Activated CD8-positive, alpha-beta T cell treated with anti-CD3 and anti-CD28 coated beads for 36 hours (primary cell): ENCODE measurements at regions of chrX and their contacts with region 1.

Region 1: DNA sequence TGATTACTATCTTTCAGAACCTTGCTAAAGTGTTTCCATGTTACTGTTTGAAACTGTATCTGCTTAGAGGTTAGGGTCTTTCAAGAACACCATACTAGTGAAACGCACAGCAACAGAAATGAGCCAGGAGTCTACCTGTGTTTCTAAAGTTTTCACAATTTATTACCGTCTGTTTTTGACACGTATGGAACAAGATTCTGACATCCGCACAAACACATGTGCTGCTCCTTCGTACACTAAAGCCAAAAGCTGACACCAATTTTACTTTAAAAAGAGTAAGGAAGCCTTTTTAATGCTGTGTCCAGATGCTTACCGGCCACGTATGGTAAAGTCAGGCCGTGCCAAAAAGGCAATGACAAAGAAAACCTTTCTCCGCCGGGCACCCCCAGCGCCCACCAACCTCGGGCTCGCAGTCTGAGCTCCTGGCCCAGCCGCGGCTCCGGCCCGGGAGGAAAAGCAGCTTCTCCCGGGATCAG is 532 bp downstream of the RPS4X start:
- DNase-seq: no peak
- ATAC-seq: no peak
- H3K4me3 Mint-ChIP-seq: peak overlapping the region; percentile 88
- H3K27ac Mint-ChIP-seq: peak overlapping the region; percentile 87
- H3K4me1 Mint-ChIP-seq: peaks cover 36% of the 10 kb centered on the region
- H3K27me3 Mint-ChIP-seq: peaks cover 3% of the 10 kb centered on the region
- CTCF ChIP-seq: no peak

Region 2: DNA sequence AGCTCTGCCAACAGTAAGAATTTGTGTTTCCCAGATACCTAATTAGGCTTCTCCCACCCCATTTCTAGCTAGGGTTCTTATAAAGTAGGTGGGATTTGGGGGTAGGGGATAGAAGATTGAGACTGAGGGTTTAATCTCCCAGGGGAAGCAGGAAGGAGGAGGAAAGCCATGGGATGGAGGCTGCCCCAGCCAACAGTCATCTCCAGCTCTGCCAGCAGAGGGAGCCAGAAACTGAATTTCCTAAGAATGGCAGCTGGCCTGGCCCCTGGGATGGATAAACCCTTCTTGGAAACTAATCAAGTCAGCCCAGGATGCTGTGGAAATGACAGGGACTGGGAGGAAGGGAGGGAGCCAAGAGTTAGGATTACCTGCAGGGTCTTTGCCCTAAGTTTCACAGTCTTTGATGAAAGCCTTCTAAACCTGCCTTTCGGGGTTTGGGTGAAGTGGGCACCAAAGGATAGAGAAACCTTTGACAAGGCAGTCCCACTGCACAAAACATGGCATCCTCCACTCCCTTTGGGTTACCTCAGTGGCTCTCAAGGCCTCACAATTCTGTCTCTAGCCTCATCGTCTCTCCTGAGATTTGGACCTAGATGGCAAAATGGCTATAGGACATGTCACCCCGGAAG is 30.9 kb before region 1 on chrX:
- CTCF ChIA-PET with region 1: interaction called, 8 read pairs
- POLR2A ChIA-PET with region 1: interaction called, 10 read pairs
- intact Hi-C with region 1: no loop called
- DNase-seq: peak; percentile 50
- ATAC-seq: peak; percentile 55
- H3K4me3 Mint-ChIP-seq: no peak overlapping the region
- H3K27ac Mint-ChIP-seq: no peak overlapping the region
- H3K4me1 Mint-ChIP-seq: no peaks in the 10 kb centered on the region
- H3K27me3 Mint-ChIP-seq: no peaks in the 10 kb centered on the region
- CTCF ChIP-seq: peak; percentile 68

Region 3: GRCh38 chrX:72306851-72307645 is 30.5 kb after region 1 on chrX:
- CTCF ChIA-PET with region 1: interaction called, 8 read pairs
- POLR2A ChIA-PET with region 1: interaction called, 14 read pairs
- intact Hi-C with region 1: no loop called
- DNase-seq: peak; percentile 27
- ATAC-seq: peak; percentile 27
- H3K4me3 Mint-ChIP-seq: peak overlapping the region; percentile 68
- H3K27ac Mint-ChIP-seq: no peak overlapping the region
- H3K4me1 Mint-ChIP-seq: peaks cover 21% of the 10 kb centered on the region
- H3K27me3 Mint-ChIP-seq: peaks cover 48% of the 10 kb centered on the region
- CTCF ChIP-seq: no peak